SK-N-SH (cell line): ENCODE measurements at regions of chr19 and their contacts with region 1.

Region 1: GRCh38 chr19:33778089-33778791 is 18.4 kb upstream of the KCTD15 start:
- DNase-seq: peak; percentile 98
- H3K4me3 ChIP-seq: peak overlapping the region in 1 of 2 experiments; percentile 53; a peak in 2 of 4 replicates
- H3K27ac ChIP-seq: no peak overlapping the region
- H3K4me1 ChIP-seq: peaks cover 0 to 21% of the 10 kb centered on the region in 2 experiments; a peak in 1 of 4 replicates
- H3K27me3 ChIP-seq: no peaks in the 10 kb centered on the region; the same call in 1 of the 2 replicates
- CTCF ChIP-seq: peak; percentile 97
- EP300 ChIP-seq: no peak
- RAD21 ChIP-seq: peak; percentile 99

Region 2: DNA sequence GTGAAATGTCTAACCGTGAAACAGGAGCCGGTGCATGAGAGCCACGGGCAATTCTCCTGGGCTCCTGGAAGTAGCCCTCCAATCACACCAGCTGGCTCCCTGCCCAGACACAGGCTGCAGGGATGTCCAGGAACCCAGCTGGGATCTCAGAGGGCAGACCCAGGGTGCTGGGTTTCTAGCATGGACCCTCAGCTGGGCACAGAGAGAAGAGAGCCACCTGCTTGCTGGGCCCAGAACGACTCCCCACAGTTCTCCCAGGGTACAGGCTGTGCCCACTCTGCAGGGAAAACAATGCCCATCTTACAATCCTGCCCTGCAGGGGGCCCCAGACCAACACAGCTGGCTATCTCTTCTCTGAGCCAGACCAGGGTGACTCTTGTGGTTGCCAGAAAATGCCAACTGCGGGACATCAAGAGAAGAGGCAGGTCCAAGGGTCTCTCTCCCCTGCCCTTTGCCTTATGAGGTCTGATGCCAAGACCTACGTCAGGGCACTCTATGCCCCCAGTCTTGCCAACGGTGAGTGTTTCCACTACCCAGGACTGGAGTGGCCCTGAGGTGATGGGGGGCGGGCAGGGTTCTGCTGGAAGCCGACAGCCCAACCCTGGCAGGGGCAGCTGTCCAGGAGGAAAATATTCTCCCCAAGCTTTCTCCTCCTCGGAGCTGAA is 340.1 kb before region 1 on chr19:
- CTCF ChIA-PET with region 1: interaction called, 59 read pairs
- POLR2A ChIA-PET with region 1: no interaction called
- DNase-seq: peak; percentile 89
- H3K4me3 ChIP-seq: no peak overlapping the region
- H3K27ac ChIP-seq: peak overlapping the region; percentile 43 to 91; a peak in 3 of 4 replicates
- H3K4me1 ChIP-seq: peaks cover 17 to 60% of the 10 kb centered on the region in 2 experiments
- H3K27me3 ChIP-seq: no peaks in the 10 kb centered on the region
- CTCF ChIP-seq: peak; percentile 49
- EP300 ChIP-seq: peak in 1 of 2 experiments; percentile 77; a peak in 2 of 4 replicates
- RAD21 ChIP-seq: peak; percentile 61

Region 3: DNA sequence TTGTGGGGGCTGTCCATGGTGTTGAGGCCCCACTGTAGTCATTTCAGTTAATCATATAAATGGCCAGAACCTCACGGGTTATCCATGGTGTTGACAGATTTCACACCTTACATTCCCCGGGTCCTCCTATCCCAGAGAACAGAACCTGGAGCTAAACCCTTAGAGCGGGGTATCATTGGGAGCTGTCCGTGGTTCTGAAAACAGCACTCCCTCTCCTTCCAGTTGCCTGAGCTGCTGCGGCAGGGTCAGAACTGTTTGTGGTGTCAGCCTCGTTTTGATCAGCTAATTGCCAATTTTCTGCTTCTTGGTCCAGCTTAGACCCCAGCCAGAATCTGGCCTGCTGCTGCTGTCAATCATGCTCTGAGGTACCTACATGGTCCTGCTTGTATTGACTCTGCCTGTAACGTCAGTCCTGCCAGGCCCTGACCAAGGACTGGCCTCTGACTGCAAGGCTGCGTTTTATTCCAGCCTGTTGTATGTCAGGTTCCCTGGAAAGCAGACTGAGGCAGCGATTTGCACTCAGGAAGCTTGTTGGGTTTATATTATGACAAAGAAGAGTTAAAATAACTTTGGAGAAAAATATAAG is 37.3 kb before region 1 on chr19:
- CTCF ChIA-PET with region 1: no interaction called
- POLR2A ChIA-PET with region 1: no interaction called
- DNase-seq: no peak
- H3K4me3 ChIP-seq: no peak overlapping the region
- H3K27ac ChIP-seq: no peak overlapping the region
- H3K4me1 ChIP-seq: peaks cover 0 to 3% of the 10 kb centered on the region in 2 experiments; a peak in 1 of 4 replicates
- H3K27me3 ChIP-seq: no peaks in the 10 kb centered on the region
- CTCF ChIP-seq: no peak
- EP300 ChIP-seq: no peak
- RAD21 ChIP-seq: no peak

Region 4: GRCh38 chr19:33826521-33826920 is 48.3 kb after region 1 on chr19:
- CTCF ChIA-PET with region 1: no interaction called
- POLR2A ChIA-PET with region 1: no interaction called
- DNase-seq: no peak
- H3K4me3 ChIP-seq: no peak overlapping the region
- H3K27ac ChIP-seq: no peak overlapping the region
- H3K4me1 ChIP-seq: no peaks in the 10 kb centered on the region; a peak in 1 of 4 replicates
- H3K27me3 ChIP-seq: no peaks in the 10 kb centered on the region
- CTCF ChIP-seq: no peak
- EP300 ChIP-seq: no peak
- RAD21 ChIP-seq: no peak

Region 5: DNA sequence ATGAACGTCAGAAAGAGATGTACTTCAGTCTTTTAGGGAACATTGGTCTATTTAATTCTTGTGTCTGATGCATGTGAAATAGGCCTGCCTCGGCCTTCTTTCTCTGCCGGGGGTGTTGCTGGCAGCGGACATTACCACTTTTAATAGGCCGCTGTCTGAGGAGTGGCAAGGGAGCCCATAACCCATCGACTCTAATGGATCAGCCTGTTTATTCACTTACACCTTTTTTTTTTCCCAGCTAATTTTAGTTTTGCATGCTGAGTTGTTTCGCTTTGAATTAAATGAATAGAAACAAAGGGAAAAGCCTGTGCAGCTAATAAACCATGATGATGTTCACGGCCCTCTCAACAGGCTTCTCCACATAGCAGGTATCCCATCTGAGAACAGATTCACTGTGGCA is 96.8 kb after region 1 on chr19:
- CTCF ChIA-PET with region 1: interaction called, 41 read pairs
- POLR2A ChIA-PET with region 1: no interaction called
- DNase-seq: no peak
- H3K4me3 ChIP-seq: no peak overlapping the region
- H3K27ac ChIP-seq: no peak overlapping the region
- H3K4me1 ChIP-seq: peaks cover 0 to 18% of the 10 kb centered on the region in 2 experiments; a peak in 1 of 4 replicates
- H3K27me3 ChIP-seq: no peaks in the 10 kb centered on the region
- CTCF ChIP-seq: no peak
- EP300 ChIP-seq: no peak
- RAD21 ChIP-seq: no peak

Region 6: DNA sequence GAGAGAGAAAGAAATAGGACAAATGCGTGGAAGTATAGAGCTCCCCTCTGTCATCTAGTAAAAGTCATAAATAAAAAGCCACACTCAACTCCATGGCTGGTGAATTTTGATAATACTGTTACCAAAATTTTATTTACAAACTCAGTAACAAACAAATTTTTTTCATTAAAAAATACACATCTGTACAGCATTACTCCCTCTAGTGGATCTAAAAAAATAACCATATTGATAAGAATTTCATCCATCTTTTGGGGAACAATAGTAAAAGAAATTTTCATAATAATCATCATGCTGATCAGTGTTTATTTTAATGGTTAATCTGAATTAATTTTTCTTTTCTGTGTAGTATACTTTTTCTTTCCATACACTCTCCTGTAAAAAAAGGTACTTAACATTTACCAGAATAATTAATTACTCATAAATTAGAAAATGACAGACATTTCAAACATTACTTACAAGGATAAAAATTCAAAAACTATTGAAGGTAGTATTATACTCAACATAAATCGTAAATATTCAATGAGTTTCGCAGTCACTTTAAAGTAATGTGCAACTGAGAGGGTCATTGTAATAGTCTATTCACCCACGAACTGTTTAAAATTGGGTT is 220.6 kb after region 1 on chr19:
- CTCF ChIA-PET with region 1: interaction called, 88 read pairs
- POLR2A ChIA-PET with region 1: no interaction called
- DNase-seq: peak; percentile 33
- H3K4me3 ChIP-seq: no peak overlapping the region
- H3K27ac ChIP-seq: no peak overlapping the region
- H3K4me1 ChIP-seq: no peaks in the 10 kb centered on the region; a peak in 1 of 4 replicates
- H3K27me3 ChIP-seq: no peaks in the 10 kb centered on the region
- CTCF ChIP-seq: peak; percentile 63
- EP300 ChIP-seq: no peak
- RAD21 ChIP-seq: peak; percentile 49

Region 7: DNA sequence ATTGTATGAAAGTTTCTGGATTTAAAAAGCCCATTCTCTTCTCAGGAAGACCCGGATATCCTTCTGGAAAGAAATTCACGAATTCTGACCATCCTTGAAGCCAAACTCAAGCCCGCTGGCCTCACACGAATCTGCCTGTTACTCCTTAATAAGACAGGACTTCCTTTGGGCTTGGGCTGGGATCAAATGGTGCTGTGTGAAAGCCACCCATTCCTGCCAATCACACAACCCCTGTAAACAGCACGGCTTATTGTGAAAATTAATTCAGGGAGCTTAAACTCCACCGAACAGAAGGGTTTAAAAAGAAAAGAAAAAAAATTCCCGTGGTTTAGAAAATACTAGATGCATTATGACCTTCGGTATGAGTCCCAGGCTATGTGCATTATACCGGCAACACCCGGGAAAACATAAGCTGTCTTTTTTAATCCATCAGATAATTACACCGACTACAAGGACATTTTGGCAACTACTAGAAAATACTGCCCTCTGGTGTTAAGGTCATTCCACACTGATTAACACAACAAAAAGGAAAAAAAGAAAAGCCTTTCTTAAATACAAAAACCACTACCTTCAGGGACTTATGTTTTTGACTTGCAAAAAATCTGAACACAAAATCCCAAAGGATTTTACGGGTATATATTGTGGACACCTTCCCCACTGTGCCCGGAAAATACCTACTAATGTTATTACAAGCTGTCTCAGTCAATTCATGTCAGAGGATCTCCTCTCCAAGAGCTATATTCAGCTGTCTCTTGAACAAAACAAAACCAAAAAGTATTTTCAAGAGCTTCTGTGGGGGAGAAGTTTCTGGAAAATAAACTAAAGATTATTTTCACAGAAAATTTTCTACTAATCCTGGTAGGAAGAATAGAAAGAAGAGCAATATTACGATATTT is 318.0 kb after region 1 on chr19:
- CTCF ChIA-PET with region 1: interaction called, 336 read pairs
- POLR2A ChIA-PET with region 1: interaction called, 7 read pairs
- DNase-seq: peak; percentile 72
- H3K4me3 ChIP-seq: peak overlapping the region; percentile 3 to 12; a peak in 2 of 4 replicates
- H3K27ac ChIP-seq: no peak overlapping the region
- H3K4me1 ChIP-seq: no peaks in the 10 kb centered on the region
- H3K27me3 ChIP-seq: no peaks in the 10 kb centered on the region
- CTCF ChIP-seq: peak; percentile 74
- EP300 ChIP-seq: no peak
- RAD21 ChIP-seq: peak; percentile 91

Region 8: DNA sequence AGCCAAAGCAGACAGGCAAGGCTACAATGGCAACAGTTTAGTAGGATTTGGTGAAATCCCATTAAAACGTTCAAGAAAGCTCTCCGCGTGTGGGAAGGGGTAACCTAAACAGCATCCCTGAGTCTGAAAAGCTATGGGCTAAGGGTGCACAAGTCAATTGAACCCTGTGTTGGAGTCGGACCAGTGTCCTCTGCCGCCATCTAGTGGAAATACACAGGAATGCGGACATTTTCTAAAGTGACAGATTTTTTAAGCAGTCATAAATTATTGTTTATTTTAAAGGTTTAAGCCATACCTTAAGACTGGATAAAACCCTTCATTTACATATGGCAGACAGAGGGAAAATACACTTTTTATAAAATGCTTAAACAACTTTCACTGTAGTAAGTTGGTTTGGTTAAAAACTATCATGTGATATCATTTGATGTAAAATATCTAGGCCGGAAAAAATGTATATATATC is 367.5 kb after region 1 on chr19:
- CTCF ChIA-PET with region 1: interaction called, 141 read pairs
- POLR2A ChIA-PET with region 1: no interaction called
- DNase-seq: peak; percentile 74
- H3K4me3 ChIP-seq: no peak overlapping the region
- H3K27ac ChIP-seq: no peak overlapping the region
- H3K4me1 ChIP-seq: no peaks in the 10 kb centered on the region; a peak in 1 of 4 replicates
- H3K27me3 ChIP-seq: no peaks in the 10 kb centered on the region
- CTCF ChIP-seq: peak; percentile 94
- EP300 ChIP-seq: no peak
- RAD21 ChIP-seq: peak; percentile 90